ENCODE measurements at regions of chr1 and their contacts with region 1.

Region 1: DNA sequence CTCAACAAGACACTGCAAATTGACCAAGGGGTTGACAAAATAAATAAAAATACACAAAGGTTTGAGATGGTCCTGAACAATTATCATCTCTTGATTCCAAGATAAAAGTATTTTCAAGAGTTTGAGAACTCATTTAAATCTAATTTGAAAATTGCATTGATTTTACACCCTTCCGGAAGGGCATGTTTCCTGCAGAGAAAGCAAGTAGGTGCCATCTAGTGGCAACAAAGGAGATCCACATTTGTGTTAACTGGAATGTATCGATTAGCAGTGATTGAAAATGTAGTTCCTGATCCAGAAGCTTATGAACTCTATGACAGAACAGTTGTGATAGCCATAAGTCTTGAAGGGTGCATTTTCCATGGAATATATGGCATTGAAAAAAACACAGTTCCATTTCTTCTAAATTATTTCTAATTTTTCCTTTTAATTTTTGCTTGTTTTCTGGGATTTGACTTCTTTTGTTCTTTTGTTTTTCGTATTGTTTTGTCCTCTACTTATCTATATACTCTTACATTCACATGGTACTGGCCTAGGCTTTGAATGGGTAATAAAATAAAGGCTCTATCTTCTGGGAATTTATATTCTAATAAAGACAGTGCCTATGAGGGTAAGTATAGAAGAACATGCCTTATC is 143.7 kb downstream of the DNM3 start:
- DNase-seq: peak; percentile 19
- H3K4me3 ChIP-seq: no peak overlapping the region
- H3K27ac ChIP-seq: no peak overlapping the region
- H3K4me1 ChIP-seq: no peaks in the 10 kb centered on the region; a peak in 1 of 4 replicates
- H3K27me3 ChIP-seq: no peaks in the 10 kb centered on the region; the same call in 1 of the 2 replicates
- CTCF ChIP-seq: peak; percentile 89
- EP300 ChIP-seq: no peak
- RAD21 ChIP-seq: peak; percentile 81

Region 2: GRCh38 chr1:171781176-171781875 is 203.6 kb before region 1 on chr1 and contains the start of gene METTL13:
- CTCF ChIA-PET with region 1: interaction called, 27 read pairs
- POLR2A ChIA-PET with region 1: no interaction called
- DNase-seq: peak; percentile 96
- H3K4me3 ChIP-seq: peak within 1 kb of the TSS; percentile 78 to 79
- H3K27ac ChIP-seq: peak within 1 kb of the TSS; percentile 84 to 96
- H3K4me1 ChIP-seq: peaks cover 9 to 29% of the 10 kb centered on the region in 2 experiments; a peak in 2 of 4 replicates
- H3K27me3 ChIP-seq: no peaks in the 10 kb centered on the region
- CTCF ChIP-seq: no peak
- EP300 ChIP-seq: peak in 1 of 2 experiments; percentile 11; a peak in 1 of 4 replicates
- RAD21 ChIP-seq: no peak
- polyA plus RNA-seq, gene METTL13: 32.7 and 41.2 TPM in 2 replicates

Region 3: DNA sequence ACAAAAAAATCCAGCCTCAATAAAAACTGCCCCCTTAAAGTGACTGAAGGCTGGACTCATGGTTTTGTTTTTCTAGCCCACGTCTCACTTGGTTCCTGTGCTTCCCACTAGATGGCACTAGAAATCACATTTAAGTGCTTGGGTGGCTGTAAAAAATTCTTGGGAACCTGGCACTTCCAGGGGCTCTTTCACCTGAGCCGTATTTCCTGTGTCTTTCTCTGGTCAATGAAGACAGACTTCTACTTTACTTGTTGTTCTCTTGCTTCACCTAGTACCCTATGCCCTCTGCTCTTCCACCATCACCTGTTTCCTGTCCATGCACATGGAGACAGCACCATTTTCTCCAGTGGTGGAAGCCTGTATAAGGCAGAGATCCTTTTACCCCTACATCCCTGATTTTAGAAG is 183.5 kb before region 1 on chr1:
- CTCF ChIA-PET with region 1: interaction called, 413 read pairs
- POLR2A ChIA-PET with region 1: no interaction called
- DNase-seq: peak; percentile 60
- H3K4me3 ChIP-seq: no peak overlapping the region
- H3K27ac ChIP-seq: no peak overlapping the region
- H3K4me1 ChIP-seq: no peaks in the 10 kb centered on the region
- H3K27me3 ChIP-seq: no peaks in the 10 kb centered on the region
- CTCF ChIP-seq: peak; percentile 86
- EP300 ChIP-seq: no peak
- RAD21 ChIP-seq: peak; percentile 84

Region 4: DNA sequence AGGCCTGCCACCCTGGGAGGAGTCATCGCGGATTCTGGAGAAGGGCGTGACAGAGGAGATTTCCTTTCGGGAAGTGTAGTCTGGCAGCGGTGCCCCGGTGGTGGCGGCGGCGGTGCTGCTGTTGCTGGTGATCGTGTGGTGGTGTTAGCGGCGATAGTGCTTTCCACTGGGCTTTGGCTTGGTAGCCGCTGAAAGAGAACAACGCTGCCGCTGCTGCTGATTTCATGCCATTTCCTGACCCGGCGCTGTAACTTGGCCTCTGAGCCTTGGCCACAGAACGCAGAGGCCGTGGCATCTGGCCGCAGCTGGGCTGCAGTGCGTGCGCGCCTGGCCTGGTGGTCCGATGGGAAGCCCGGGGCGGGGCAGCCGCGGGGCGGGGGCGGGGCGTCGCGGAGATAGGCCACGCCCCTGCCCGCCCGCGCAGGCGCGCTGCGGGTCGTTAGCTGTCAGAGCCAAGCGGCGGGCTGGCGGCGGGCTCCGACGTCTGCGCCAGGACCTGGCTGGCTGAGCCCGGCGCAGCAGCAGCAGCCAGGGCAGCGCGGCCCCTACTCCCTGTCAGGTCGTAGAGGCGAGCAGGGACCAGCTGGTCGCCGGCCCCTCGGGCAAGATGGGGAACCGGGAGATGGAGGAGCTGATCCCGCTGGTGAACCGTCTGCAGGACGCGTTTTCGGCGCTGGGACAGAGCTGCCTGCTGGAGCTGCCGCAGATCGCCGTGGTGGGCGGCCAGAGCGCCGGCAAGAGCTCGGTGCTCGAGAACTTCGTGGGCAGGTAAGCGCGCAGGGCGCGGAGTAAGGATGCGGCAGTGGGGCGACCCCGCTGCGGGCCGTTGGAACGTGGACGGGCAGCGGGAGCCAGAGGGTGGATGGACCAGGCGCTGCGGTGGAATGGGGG is 143.7 kb before region 1 on chr1 and contains the start of gene DNM3:
- CTCF ChIA-PET with region 1: interaction called, 10 read pairs
- POLR2A ChIA-PET with region 1: no interaction called
- DNase-seq: peak; percentile 97
- H3K4me3 ChIP-seq: peak within 1 kb of the TSS; percentile 49 to 60
- H3K27ac ChIP-seq: 0 out of 4 replicates have a peak within 1 kb of the TSS, but pooled peaks of 1 of the 2 experiments have one; percentile 1
- H3K4me1 ChIP-seq: peaks cover 0 to 15% of the 10 kb centered on the region in 2 experiments; a peak in 2 of 4 replicates
- H3K27me3 ChIP-seq: peaks cover 26% of the 10 kb centered on the region
- CTCF ChIP-seq: no peak
- EP300 ChIP-seq: no peak
- RAD21 ChIP-seq: no peak
- polyA plus RNA-seq, gene DNM3: 0.43 and 0.89 TPM in 2 replicates

Region 5: DNA sequence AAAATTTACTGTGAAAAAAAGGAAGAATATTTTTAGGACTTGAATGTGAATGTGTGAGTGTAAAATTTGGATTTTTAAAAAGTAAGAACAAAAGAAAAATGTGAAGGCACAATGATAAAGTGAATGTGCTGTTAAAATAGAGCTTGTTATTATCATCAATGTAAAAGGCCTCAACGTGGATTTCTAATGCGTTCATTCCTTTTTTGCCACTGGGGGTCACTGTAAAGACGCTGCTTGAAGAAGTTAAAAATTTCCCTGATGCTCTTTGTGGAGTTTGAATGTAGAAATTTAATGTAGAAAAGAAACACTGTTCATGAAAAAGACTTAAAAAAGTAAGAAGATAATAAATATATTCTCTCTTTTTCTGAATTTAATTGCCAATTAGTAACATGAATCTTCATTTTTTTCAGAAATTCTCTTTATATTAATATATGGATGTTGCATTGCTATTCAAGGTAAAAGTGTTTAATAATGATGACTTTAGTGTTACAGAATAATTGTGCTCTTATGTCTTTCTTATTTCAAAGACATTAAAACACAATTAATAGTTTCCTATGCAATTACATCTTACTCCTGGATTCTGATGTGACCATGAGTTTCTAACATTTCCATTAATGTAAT is 17.9 kb after region 1 on chr1:
- CTCF ChIA-PET with region 1: interaction called, 34 read pairs
- POLR2A ChIA-PET with region 1: no interaction called
- DNase-seq: peak; percentile 20
- H3K4me3 ChIP-seq: no peak overlapping the region
- H3K27ac ChIP-seq: no peak overlapping the region
- H3K4me1 ChIP-seq: peaks cover 5 to 10% of the 10 kb centered on the region in 2 experiments; a peak in 2 of 4 replicates
- H3K27me3 ChIP-seq: no peaks in the 10 kb centered on the region
- CTCF ChIP-seq: peak; percentile 93
- EP300 ChIP-seq: no peak
- RAD21 ChIP-seq: peak; percentile 90

Measured in SK-N-SH (cell line).